ENCODE measurements at regions of chr20 and their contacts with region 1.

Region 1: GRCh38 chr20:17542993-17543412 is 11.8 kb upstream of the BFSP1 start:
- DNase-seq: no peak
- H3K4me3 ChIP-seq: no peak overlapping the region
- H3K27ac ChIP-seq: no peak overlapping the region
- H3K4me1 ChIP-seq: peaks cover 6% of the 10 kb centered on the region
- H3K27me3 ChIP-seq: no peaks in the 10 kb centered on the region
- CTCF ChIP-seq: no peak

Region 2: DNA sequence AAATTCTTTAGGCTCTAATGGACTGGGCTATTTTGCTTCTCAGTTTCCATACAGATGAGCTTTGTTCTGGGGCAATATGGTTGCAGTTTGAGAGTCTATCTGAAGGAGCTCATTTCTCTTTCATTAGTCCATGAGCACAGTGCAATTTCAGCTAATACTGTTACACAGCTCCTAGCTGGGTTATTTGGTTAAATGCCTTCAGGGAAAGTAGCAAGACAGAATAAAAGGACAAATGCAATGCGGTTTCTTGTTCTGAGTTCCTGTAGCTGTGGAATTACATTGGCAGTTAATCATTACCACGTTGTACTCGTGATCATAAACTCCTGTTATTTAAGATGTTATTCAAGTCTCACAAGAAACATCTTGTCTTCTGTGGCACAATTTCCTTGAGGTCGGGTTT is 139.5 kb before region 1 on chr20:
- CTCF ChIA-PET with region 1: no interaction called
- POLR2A ChIA-PET with region 1: no interaction called
- intact Hi-C with region 1: no loop called
- DNase-seq: no peak
- H3K4me3 ChIP-seq: no peak overlapping the region
- H3K27ac ChIP-seq: no peak overlapping the region
- H3K4me1 ChIP-seq: no peaks in the 10 kb centered on the region
- H3K27me3 ChIP-seq: no peaks in the 10 kb centered on the region
- CTCF ChIP-seq: no peak

Region 3: GRCh38 chr20:17558154-17558940 is 15.3 kb after region 1 on chr20:
- CTCF ChIA-PET with region 1: interaction called, 12 read pairs
- POLR2A ChIA-PET with region 1: interaction called, 3 read pairs
- intact Hi-C with region 1: no loop called
- DNase-seq: peak; percentile 86
- H3K4me3 ChIP-seq: no peak overlapping the region
- H3K27ac ChIP-seq: peak overlapping the region; percentile 65
- H3K4me1 ChIP-seq: peaks cover 22% of the 10 kb centered on the region
- H3K27me3 ChIP-seq: no peaks in the 10 kb centered on the region
- CTCF ChIP-seq: no peak

Region 4: GRCh38 chr20:17699931-17700657 is 157.1 kb after region 1 on chr20 and contains the start of gene BANF2:
- CTCF ChIA-PET with region 1: no interaction called
- POLR2A ChIA-PET with region 1: no interaction called
- intact Hi-C with region 1: no loop called
- DNase-seq: no peak
- H3K4me3 ChIP-seq: no peak within 1 kb of the TSS
- H3K27ac ChIP-seq: no peak within 1 kb of the TSS
- H3K4me1 ChIP-seq: no peaks in the 10 kb centered on the region
- H3K27me3 ChIP-seq: no peaks in the 10 kb centered on the region
- CTCF ChIP-seq: no peak
- total RNA-seq, gene BANF2: not detected in 2 replicates